GM12878 (cell line): ENCODE measurements at regions of chr1 and their contacts with region 1.

Region 1: GRCh38 chr1:182861994-182862393 is 22.8 kb downstream of the DHX9 start:
- DNase-seq: no peak
- ATAC-seq: no peak
- H3K4me3 ChIP-seq: no peak overlapping the region
- H3K27ac ChIP-seq: no peak overlapping the region
- H3K4me1 ChIP-seq: no peaks in the 10 kb centered on the region
- H3K27me3 ChIP-seq: no peaks in the 10 kb centered on the region
- CTCF ChIP-seq: no peak
- EP300 ChIP-seq: no peak
- POLR2A ChIP-seq: no peak
- RAD21 ChIP-seq: no peak

Region 2: GRCh38 chr1:182291584-182292192 is 570.3 kb before region 1 on chr1:
- CTCF ChIA-PET with region 1: no interaction called
- POLR2A ChIA-PET with region 1: no interaction called
- RAD21 ChIA-PET with region 1: no interaction called
- SMC1A ChIA-PET with region 1: no interaction called
- in situ Hi-C with region 1: no loop called
- intact Hi-C with region 1: no loop called
- DNase-seq: no peak
- ATAC-seq: no peak
- H3K4me3 ChIP-seq: no peak overlapping the region
- H3K27ac ChIP-seq: no peak overlapping the region
- H3K4me1 ChIP-seq: no peaks in the 10 kb centered on the region
- H3K27me3 ChIP-seq: peaks cover 0 to 5% of the 10 kb centered on the region in 2 experiments; a peak in 3 of 4 replicates
- CTCF ChIP-seq: no peak
- EP300 ChIP-seq: no peak
- POLR2A ChIP-seq: no peak
- RAD21 ChIP-seq: no peak

Region 3: GRCh38 chr1:182877842-182878241 is 15.8 kb after region 1 on chr1:
- CTCF ChIA-PET with region 1: interaction called, 5 read pairs
- POLR2A ChIA-PET with region 1: no interaction called
- RAD21 ChIA-PET with region 1: no interaction called
- SMC1A ChIA-PET with region 1: interaction called, 4 read pairs
- in situ Hi-C with region 1: no loop called
- intact Hi-C with region 1: loop called (anchors 2 kb)
- DNase-seq: no peak
- ATAC-seq: no peak
- H3K4me3 ChIP-seq: no peak overlapping the region
- H3K27ac ChIP-seq: no peak overlapping the region
- H3K4me1 ChIP-seq: no peaks in the 10 kb centered on the region
- H3K27me3 ChIP-seq: no peaks in the 10 kb centered on the region
- CTCF ChIP-seq: no peak
- EP300 ChIP-seq: no peak
- POLR2A ChIP-seq: no peak
- RAD21 ChIP-seq: no peak

Region 4: DNA sequence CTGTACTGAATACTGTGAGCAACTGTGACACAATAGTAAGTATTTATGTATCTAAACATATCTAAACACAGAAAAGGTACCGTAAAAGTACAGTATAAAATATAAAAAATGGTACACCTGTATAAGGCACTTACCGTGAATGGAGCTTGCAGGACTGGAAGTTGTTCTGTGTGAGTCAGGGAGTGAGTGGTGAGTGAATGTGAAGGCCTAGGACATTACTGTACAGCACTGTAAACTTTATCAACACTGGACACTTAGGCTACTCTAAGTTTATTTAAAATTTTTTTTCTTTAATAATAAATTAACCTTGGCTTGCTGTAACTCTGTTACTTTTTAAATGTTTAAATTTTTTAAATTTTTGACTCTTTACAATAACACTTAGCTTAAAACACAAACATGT is 115.5 kb after region 1 on chr1:
- CTCF ChIA-PET with region 1: no interaction called
- POLR2A ChIA-PET with region 1: no interaction called
- RAD21 ChIA-PET with region 1: no interaction called
- SMC1A ChIA-PET with region 1: no interaction called
- in situ Hi-C with region 1: no loop called
- intact Hi-C with region 1: no loop called
- DNase-seq: no peak
- ATAC-seq: no peak
- H3K4me3 ChIP-seq: no peak overlapping the region
- H3K27ac ChIP-seq: no peak overlapping the region
- H3K4me1 ChIP-seq: no peaks in the 10 kb centered on the region
- H3K27me3 ChIP-seq: no peaks in the 10 kb centered on the region
- CTCF ChIP-seq: no peak
- EP300 ChIP-seq: no peak
- POLR2A ChIP-seq: no peak
- RAD21 ChIP-seq: no peak

Region 5: GRCh38 chr1:183567584-183567983 is 705.6 kb after region 1 on chr1:
- CTCF ChIA-PET with region 1: no interaction called
- POLR2A ChIA-PET with region 1: no interaction called
- RAD21 ChIA-PET with region 1: no interaction called
- SMC1A ChIA-PET with region 1: no interaction called
- in situ Hi-C with region 1: no loop called
- intact Hi-C with region 1: no loop called
- DNase-seq: peak; percentile 17
- ATAC-seq: peak; percentile 80
- H3K4me3 ChIP-seq: no peak overlapping the region
- H3K27ac ChIP-seq: no peak overlapping the region
- H3K4me1 ChIP-seq: peaks cover 9% of the 10 kb centered on the region
- H3K27me3 ChIP-seq: no peaks in the 10 kb centered on the region
- CTCF ChIP-seq: no peak
- EP300 ChIP-seq: no peak
- POLR2A ChIP-seq: no peak
- RAD21 ChIP-seq: no peak